ENCODE measurements at regions of chr7 and their contacts with region 1.

Region 1: GRCh38 chr7:92633211-92633906 is 43.2 kb upstream of the FAM133B start:
- DNase-seq: no peak

Region 2: GRCh38 chr7:92691578-92691977 is 58.2 kb after region 1 on chr7:
- intact Hi-C with region 1: loop called (anchors 10 kb)
- DNase-seq: no peak